ENCODE measurements at regions of chr17 and their contacts with region 1.

Region 1: GRCh38 chr17:69607162-69607834 is 192.8 kb downstream of the MAP2K6 start:
- DNase-seq: peak; percentile 62
- H3K4me3 ChIP-seq: no peak overlapping the region; a peak in 1 of 4 replicates
- H3K27ac ChIP-seq: peak overlapping the region; percentile 96 to 99
- H3K4me1 ChIP-seq: peaks cover 23 to 30% of the 10 kb centered on the region in 2 experiments
- H3K27me3 ChIP-seq: no peaks in the 10 kb centered on the region
- CTCF ChIP-seq: peak; percentile 100
- EP300 ChIP-seq: peak; percentile 42 to 69; a peak in 1 of 4 replicates
- RAD21 ChIP-seq: peak; percentile 95

Region 2: GRCh38 chr17:69560987-69561441 is 46.3 kb before region 1 on chr17:
- CTCF ChIA-PET with region 1: interaction called, 11 read pairs
- POLR2A ChIA-PET with region 1: no interaction called
- DNase-seq: peak; percentile 36
- H3K4me3 ChIP-seq: 0 out of 4 replicates have a peak overlapping the region, but pooled peaks of 1 of the 2 experiments have one; percentile 5
- H3K27ac ChIP-seq: peak overlapping the region in 1 of 2 experiments; percentile 12; a peak in 2 of 4 replicates
- H3K4me1 ChIP-seq: peaks cover 5 to 6% of the 10 kb centered on the region in 2 experiments; a peak in 2 of 4 replicates
- H3K27me3 ChIP-seq: no peaks in the 10 kb centered on the region
- CTCF ChIP-seq: no peak
- EP300 ChIP-seq: peak in 1 of 2 experiments; percentile 76; a peak in 3 of 4 replicates
- RAD21 ChIP-seq: no peak

Region 3: DNA sequence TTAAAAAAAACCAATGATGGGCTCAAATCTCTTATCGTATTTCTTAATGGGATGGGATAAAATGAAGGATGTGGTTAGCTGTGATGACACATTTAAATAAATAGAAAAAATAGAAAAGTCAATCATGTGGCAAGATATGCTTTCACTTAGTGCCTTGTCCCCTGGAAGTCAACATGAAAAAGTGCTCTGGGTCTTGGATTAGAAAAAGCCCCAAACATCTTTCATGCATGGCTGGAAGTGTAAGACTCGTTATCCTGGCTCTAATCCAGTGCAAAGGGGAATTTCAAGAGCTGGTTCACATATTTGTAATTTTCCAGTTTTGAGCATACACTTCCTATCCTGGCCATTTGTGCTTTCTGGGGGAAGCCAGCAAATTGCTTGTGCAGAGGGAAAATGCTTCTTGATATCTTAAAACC is 31.9 kb before region 1 on chr17:
- CTCF ChIA-PET with region 1: interaction called, 13 read pairs
- POLR2A ChIA-PET with region 1: no interaction called
- DNase-seq: no peak
- H3K4me3 ChIP-seq: no peak overlapping the region
- H3K27ac ChIP-seq: peak overlapping the region; percentile 11 to 31; a peak in 3 of 4 replicates
- H3K4me1 ChIP-seq: peaks cover 3 to 23% of the 10 kb centered on the region in 2 experiments; a peak in 3 of 4 replicates
- H3K27me3 ChIP-seq: no peaks in the 10 kb centered on the region
- CTCF ChIP-seq: no peak
- EP300 ChIP-seq: peak in 1 of 2 experiments; percentile 38; a peak in 1 of 4 replicates
- RAD21 ChIP-seq: no peak

Region 4: DNA sequence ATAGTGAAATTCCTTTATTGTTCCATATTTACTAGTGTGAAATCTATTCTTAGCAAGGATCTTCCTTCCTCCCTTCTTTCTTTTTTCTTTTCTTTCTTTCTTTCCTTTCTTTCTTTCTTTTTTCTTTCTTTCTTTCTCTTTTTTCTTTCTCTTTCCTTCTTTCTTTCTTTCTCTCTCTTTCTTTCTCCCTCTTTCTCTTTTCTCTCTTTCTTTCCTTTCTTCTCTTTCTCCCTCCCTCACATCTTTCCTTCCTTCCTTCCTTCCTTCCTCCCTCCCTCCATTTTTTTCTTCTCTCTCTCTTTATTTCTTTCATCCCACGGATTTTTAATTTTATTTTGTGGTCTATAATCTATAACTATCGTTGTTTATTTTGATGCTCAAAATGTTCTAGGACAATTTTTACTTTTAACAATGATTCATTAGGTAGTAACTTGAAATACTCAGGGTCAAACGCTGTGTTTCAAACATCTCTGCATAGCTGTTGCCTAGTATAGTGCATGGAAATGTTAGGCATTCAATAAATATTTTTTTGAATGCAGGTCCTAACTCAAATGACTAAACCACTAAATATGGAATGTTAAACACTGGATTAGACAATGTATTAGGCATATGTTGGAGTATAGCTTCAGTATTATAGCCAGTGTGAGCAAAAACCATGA is 14.5 kb before region 1 on chr17:
- CTCF ChIA-PET with region 1: interaction called, 24 read pairs
- POLR2A ChIA-PET with region 1: no interaction called
- DNase-seq: no peak
- H3K4me3 ChIP-seq: no peak overlapping the region
- H3K27ac ChIP-seq: peak overlapping the region in 1 of 2 experiments; percentile 36; a peak in 2 of 4 replicates
- H3K4me1 ChIP-seq: peaks cover 6 to 10% of the 10 kb centered on the region in 2 experiments; a peak in 2 of 4 replicates
- H3K27me3 ChIP-seq: no peaks in the 10 kb centered on the region
- CTCF ChIP-seq: no peak
- EP300 ChIP-seq: no peak
- RAD21 ChIP-seq: no peak

Region 5: DNA sequence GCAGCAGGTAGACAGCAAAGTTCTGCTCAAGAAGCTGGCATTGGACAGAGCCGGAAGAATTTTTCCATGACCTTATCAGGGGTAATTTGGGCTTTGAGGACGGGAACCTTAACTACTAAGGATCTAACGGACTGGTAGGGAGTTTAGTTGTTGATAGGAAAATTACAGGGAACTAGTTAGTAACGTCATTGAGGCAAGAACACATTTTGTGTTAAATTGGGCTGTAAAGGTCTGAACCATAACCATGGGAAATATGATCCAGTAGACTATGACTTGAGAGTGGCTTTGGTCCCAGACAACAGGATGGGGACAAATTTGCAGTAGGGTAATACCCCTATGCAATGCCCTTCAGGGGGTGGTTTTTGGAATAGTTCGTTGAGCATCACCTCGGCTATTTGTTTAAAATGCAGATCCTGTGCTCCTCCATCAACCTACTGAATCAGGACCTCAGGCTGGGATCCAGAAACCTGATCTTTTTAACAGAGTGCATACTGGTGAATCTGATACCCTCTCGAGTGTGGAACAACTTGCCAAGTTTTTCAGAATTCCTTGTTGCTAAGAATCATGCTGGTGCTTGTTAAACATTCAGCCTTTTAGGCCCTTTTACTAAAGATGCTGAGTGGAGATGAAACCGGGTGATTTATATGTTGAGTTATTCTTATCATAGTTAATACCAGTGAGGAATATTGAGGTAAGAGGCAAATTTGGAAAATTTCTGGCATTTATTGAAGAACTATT is 62.3 kb after region 1 on chr17:
- CTCF ChIA-PET with region 1: no interaction called
- POLR2A ChIA-PET with region 1: no interaction called
- DNase-seq: no peak
- H3K4me3 ChIP-seq: no peak overlapping the region
- H3K27ac ChIP-seq: no peak overlapping the region
- H3K4me1 ChIP-seq: no peaks in the 10 kb centered on the region; a peak in 2 of 4 replicates
- H3K27me3 ChIP-seq: no peaks in the 10 kb centered on the region
- CTCF ChIP-seq: no peak
- EP300 ChIP-seq: peak in 1 of 2 experiments; percentile 65; a peak in 1 of 4 replicates
- RAD21 ChIP-seq: no peak

Region 6: GRCh38 chr17:70138291-70138865 is 531.1 kb after region 1 on chr17:
- CTCF ChIA-PET with region 1: interaction called, 23 read pairs
- POLR2A ChIA-PET with region 1: no interaction called
- DNase-seq: no peak
- H3K4me3 ChIP-seq: no peak overlapping the region
- H3K27ac ChIP-seq: peak overlapping the region in 1 of 2 experiments; percentile 35; a peak in 1 of 4 replicates
- H3K4me1 ChIP-seq: peaks cover 0 to 2% of the 10 kb centered on the region in 2 experiments; a peak in 2 of 4 replicates
- H3K27me3 ChIP-seq: no peaks in the 10 kb centered on the region
- CTCF ChIP-seq: no peak
- EP300 ChIP-seq: peak in 1 of 2 experiments; percentile 74; a peak in 1 of 4 replicates
- RAD21 ChIP-seq: no peak

Region 7: GRCh38 chr17:70158180-70158579 is 550.9 kb after region 1 on chr17:
- CTCF ChIA-PET with region 1: interaction called, 10 read pairs
- POLR2A ChIA-PET with region 1: no interaction called
- DNase-seq: no peak
- H3K4me3 ChIP-seq: no peak overlapping the region
- H3K27ac ChIP-seq: no peak overlapping the region
- H3K4me1 ChIP-seq: peaks cover 0 to 14% of the 10 kb centered on the region in 2 experiments; a peak in 2 of 4 replicates
- H3K27me3 ChIP-seq: no peaks in the 10 kb centered on the region
- CTCF ChIP-seq: no peak
- EP300 ChIP-seq: no peak
- RAD21 ChIP-seq: no peak

Region 8: GRCh38 chr17:70552230-70552981 is 945.1 kb after region 1 on chr17:
- CTCF ChIA-PET with region 1: interaction called, 57 read pairs
- POLR2A ChIA-PET with region 1: no interaction called
- DNase-seq: peak; percentile 72
- H3K4me3 ChIP-seq: no peak overlapping the region
- H3K27ac ChIP-seq: no peak overlapping the region; a peak in 1 of 4 replicates
- H3K4me1 ChIP-seq: peaks cover 0 to 2% of the 10 kb centered on the region in 2 experiments; a peak in 2 of 4 replicates
- H3K27me3 ChIP-seq: no peaks in the 10 kb centered on the region
- CTCF ChIP-seq: peak; percentile 81
- EP300 ChIP-seq: no peak
- RAD21 ChIP-seq: peak; percentile 87